ENCODE measurements at regions of chr1 and their contacts with region 1.

Region 1: DNA sequence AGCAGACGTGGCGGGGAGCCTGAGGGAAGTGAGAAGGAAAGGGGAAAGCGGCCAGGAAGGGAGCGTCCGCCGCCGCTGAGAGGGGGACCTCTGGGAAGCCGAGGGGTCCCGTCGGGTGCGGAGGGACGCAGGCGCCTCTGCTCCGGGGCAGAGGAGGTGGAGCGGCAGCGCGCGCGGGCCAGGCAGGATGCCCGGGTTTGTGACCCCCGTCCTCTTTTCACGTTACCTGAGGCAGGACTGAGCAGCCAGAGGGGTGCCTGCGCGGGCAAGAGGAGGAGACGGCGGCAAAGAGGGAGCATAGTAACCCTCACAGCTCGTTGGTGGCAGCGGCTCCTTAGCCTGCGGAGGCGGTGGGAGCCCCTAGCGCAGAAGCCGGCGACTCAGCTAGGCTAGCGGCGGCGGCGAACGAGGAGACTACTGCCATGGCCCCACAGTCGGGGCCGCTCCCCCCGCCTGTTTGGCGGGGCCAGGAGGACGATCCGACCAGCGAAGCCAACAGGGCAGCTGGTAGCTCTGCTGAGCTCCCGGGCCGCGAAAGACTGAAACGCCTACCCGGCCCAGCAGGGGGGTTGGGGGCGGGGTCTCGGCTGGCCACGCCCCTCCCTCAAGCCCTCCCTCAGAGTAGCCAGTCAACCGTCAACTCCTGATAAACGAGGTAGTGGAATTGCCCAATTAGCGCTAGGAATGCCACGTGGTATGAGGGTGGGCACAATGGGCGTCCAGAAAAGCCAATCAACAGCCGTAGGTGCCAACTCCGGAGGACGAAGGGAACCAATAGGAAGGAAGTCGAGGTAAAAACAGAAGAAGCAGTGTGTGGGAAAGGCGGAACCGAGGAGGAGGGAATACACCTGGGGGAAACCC is at the start of gene TESK2:
- DNase-seq: peak; percentile 98
- ATAC-seq: peak; percentile 95
- H3K4me3 Mint-ChIP-seq: no peak within 1 kb of the TSS
- H3K27ac Mint-ChIP-seq: no peak within 1 kb of the TSS
- H3K4me1 Mint-ChIP-seq: peaks cover 11% of the 10 kb centered on the region
- H3K27me3 Mint-ChIP-seq: no peaks in the 10 kb centered on the region
- CTCF ChIP-seq: no peak
- total RNA-seq, gene TESK2: 2.9 to 3.7 TPM

Region 2: GRCh38 chr1:45339789-45340570 is 150.9 kb before region 1 on chr1 and contains the starts of genes MUTYH and TOE1:
- CTCF ChIA-PET with region 1: interaction called, 21 read pairs
- POLR2A ChIA-PET with region 1: interaction called, 23 read pairs
- intact Hi-C with region 1: no loop called
- DNase-seq: peak; percentile 97
- ATAC-seq: peak; percentile 87
- H3K4me3 Mint-ChIP-seq: peak within 1 kb of the TSS; percentile 99
- H3K27ac Mint-ChIP-seq: peak within 1 kb of the TSS; percentile 99
- H3K4me1 Mint-ChIP-seq: peaks cover 37% of the 10 kb centered on the region
- H3K27me3 Mint-ChIP-seq: no peaks in the 10 kb centered on the region
- CTCF ChIP-seq: no peak
- total RNA-seq, gene MUTYH: 51.4 to 54.5 TPM
- total RNA-seq, gene TOE1: 25.7 to 28.1 TPM

Region 3: GRCh38 chr1:45359882-45360513 is 130.9 kb before region 1 on chr1:
- CTCF ChIA-PET with region 1: interaction called, 191 read pairs
- POLR2A ChIA-PET with region 1: no interaction called
- intact Hi-C with region 1: loop called (anchors 2 kb)
- DNase-seq: peak; percentile 80
- ATAC-seq: peak; percentile 68
- H3K4me3 Mint-ChIP-seq: no peak overlapping the region
- H3K27ac Mint-ChIP-seq: no peak overlapping the region
- H3K4me1 Mint-ChIP-seq: peaks cover 7% of the 10 kb centered on the region
- H3K27me3 Mint-ChIP-seq: no peaks in the 10 kb centered on the region
- CTCF ChIP-seq: peak; percentile 75

Region 4: DNA sequence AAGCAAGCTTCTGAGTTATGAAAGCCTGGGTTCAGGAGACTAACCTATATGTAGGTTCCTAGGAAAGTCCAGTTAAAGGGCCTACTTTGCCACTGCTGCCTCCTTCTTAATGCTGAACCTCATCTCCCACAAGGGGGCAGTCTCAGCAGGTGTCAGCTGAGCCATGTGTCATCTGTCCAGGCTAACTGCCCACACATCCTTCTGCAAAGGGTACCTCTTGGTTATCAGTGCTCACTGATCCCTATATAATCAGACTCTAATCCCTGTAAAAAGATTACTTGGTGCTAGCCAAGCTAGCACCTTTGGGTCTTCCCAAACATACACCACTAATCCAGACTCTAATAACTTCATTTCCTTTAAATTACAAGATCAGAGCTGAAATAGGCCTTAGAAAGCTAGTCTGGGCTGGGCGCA is 21.8 kb after region 1 on chr1:
- CTCF ChIA-PET with region 1: interaction called, 17 read pairs
- POLR2A ChIA-PET with region 1: interaction called, 4 read pairs
- intact Hi-C with region 1: no loop called
- DNase-seq: peak; percentile 83
- ATAC-seq: peak; percentile 87
- H3K4me3 Mint-ChIP-seq: no peak overlapping the region
- H3K27ac Mint-ChIP-seq: peak overlapping the region; percentile 45
- H3K4me1 Mint-ChIP-seq: peaks cover 19% of the 10 kb centered on the region
- H3K27me3 Mint-ChIP-seq: no peaks in the 10 kb centered on the region
- CTCF ChIP-seq: peak; percentile 76

Region 5: GRCh38 chr1:45704637-45705036 is 213.8 kb after region 1 on chr1:
- CTCF ChIA-PET with region 1: no interaction called
- POLR2A ChIA-PET with region 1: no interaction called
- intact Hi-C with region 1: no loop called
- DNase-seq: no peak
- ATAC-seq: no peak
- H3K4me3 Mint-ChIP-seq: no peak overlapping the region
- H3K27ac Mint-ChIP-seq: no peak overlapping the region
- H3K4me1 Mint-ChIP-seq: no peaks in the 10 kb centered on the region
- H3K27me3 Mint-ChIP-seq: no peaks in the 10 kb centered on the region
- CTCF ChIP-seq: no peak